B cell (primary cell): ENCODE measurements at regions of chr5 and their contacts with region 1.

Region 1: DNA sequence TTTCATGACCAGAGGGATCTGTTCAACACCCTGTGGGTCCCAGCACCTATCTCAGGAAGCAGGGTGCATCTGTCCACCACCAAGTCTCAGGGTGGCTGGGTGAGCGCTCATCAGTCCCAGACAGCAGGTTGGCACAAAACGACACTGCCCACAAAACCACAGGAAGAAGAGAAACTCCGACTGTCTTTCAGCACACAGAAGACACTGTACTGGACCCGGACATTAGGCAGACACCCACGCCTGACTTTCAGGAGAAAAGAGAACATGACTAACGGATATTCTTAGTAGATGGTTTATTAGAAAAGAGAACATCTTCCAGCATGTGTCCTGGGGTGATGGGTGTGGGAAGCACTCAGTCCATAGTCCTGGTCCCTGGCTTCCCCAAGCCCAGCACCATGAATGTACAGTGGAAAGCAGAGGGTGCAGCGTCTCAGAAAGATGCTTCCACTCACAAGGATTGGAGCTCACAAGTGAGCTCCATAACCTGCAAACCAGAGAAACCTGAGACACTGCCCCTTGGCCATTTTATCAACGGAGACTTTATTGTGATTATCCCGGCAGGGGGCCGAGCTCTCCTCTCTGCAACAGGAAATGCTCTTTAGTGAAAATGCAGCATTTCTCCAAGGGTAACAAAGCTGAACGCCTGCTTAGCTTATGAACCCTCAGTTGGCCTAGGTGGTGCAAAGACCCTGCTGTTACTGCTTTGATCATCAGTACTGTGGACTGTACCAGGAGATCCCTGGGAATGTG is 35.8 kb upstream of the LCP2 start:
- DNase-seq: peak; percentile 30
- ATAC-seq: peak; percentile 10
- H3K4me3 ChIP-seq: no peak overlapping the region
- H3K4me3 Mint-ChIP-seq: peak overlapping the region; percentile 23
- H3K27ac ChIP-seq: peak overlapping the region in 1 of 2 donors; percentile 78
- H3K27ac Mint-ChIP-seq: no peak overlapping the region
- H3K4me1 ChIP-seq: peaks cover 53 to 59% of the 10 kb centered on the region in 2 donors
- H3K4me1 Mint-ChIP-seq: peaks cover 35% of the 10 kb centered on the region
- H3K27me3 ChIP-seq: no peaks in the 10 kb centered on the region
- H3K27me3 Mint-ChIP-seq: no peaks in the 10 kb centered on the region
- CTCF ChIP-seq: no peak

Region 2: DNA sequence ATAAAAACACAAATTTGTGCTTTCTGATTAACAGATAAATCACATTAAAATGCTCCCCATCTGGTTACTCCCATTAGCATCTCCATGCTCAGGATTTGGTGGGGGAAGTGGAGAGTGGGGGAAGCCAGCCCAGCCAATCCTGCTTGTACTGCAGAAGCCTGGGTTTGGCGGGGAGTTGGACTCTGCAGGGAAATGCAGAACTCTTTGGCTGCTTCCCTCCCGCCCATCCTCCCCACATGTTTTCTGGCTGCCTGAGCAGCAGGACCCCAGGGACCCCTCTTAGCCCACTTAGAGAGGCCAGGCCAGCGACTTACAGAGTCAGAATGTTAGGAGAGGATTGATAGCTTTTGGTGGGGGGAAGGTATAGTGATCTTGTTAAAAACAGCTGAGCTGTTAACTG is 287.1 kb before region 1 on chr5:
- CTCF ChIA-PET with region 1: no interaction called
- POLR2A ChIA-PET with region 1: no interaction called
- intact Hi-C with region 1: no loop called
- DNase-seq: no peak
- ATAC-seq: no peak
- H3K4me3 ChIP-seq: no peak overlapping the region
- H3K4me3 Mint-ChIP-seq: no peak overlapping the region
- H3K27ac ChIP-seq: no peak overlapping the region
- H3K27ac Mint-ChIP-seq: no peak overlapping the region
- H3K4me1 ChIP-seq: no peaks in the 10 kb centered on the region
- H3K4me1 Mint-ChIP-seq: no peaks in the 10 kb centered on the region
- H3K27me3 ChIP-seq: no peaks in the 10 kb centered on the region
- H3K27me3 Mint-ChIP-seq: no peaks in the 10 kb centered on the region
- CTCF ChIP-seq: no peak

Region 3: GRCh38 chr5:170293273-170293672 is 40.1 kb before region 1 on chr5:
- CTCF ChIA-PET with region 1: interaction called, 67 read pairs
- POLR2A ChIA-PET with region 1: interaction called, 5 read pairs
- intact Hi-C with region 1: loop called (anchors 1 kb)
- DNase-seq: peak; percentile 91
- ATAC-seq: peak; percentile 92
- H3K4me3 ChIP-seq: peak overlapping the region in 2 of 5 experiments; percentile 19 to 34
- H3K4me3 Mint-ChIP-seq: peak overlapping the region; percentile 30
- H3K27ac ChIP-seq: no peak overlapping the region
- H3K27ac Mint-ChIP-seq: peak overlapping the region; percentile 60
- H3K4me1 ChIP-seq: peaks cover 59 to 70% of the 10 kb centered on the region in 2 donors
- H3K4me1 Mint-ChIP-seq: peaks cover 63% of the 10 kb centered on the region
- H3K27me3 ChIP-seq: peaks cover 0 to 45% (median 19%) of the 10 kb centered on the region in 4 experiments
- H3K27me3 Mint-ChIP-seq: peaks cover 36% of the 10 kb centered on the region
- CTCF ChIP-seq: no peak

Region 4: GRCh38 chr5:170451747-170452365 is 118.5 kb after region 1 on chr5:
- CTCF ChIA-PET with region 1: no interaction called
- POLR2A ChIA-PET with region 1: no interaction called
- intact Hi-C with region 1: no loop called
- DNase-seq: no peak
- ATAC-seq: no peak
- H3K4me3 ChIP-seq: no peak overlapping the region
- H3K4me3 Mint-ChIP-seq: no peak overlapping the region
- H3K27ac ChIP-seq: no peak overlapping the region
- H3K27ac Mint-ChIP-seq: no peak overlapping the region
- H3K4me1 ChIP-seq: no peaks in the 10 kb centered on the region
- H3K4me1 Mint-ChIP-seq: no peaks in the 10 kb centered on the region
- H3K27me3 ChIP-seq: peaks cover 0 to 2% (median 0%) of the 10 kb centered on the region in 4 experiments
- H3K27me3 Mint-ChIP-seq: peaks cover 12% of the 10 kb centered on the region
- CTCF ChIP-seq: no peak